ENCODE measurements at regions of chr10 and their contacts with region 1.

Region 1: GRCh38 chr10:113479346-113480080 is 73.3 kb upstream of the HABP2 start:
- DNase-seq: no peak
- ATAC-seq: no peak
- H3K4me3 Mint-ChIP-seq: no peak overlapping the region
- H3K27ac Mint-ChIP-seq: no peak overlapping the region
- H3K4me1 Mint-ChIP-seq: no peaks in the 10 kb centered on the region
- H3K27me3 Mint-ChIP-seq: peaks cover 5% of the 10 kb centered on the region

Region 2: GRCh38 chr10:112904000-112904399 is 575.5 kb before region 1 on chr10:
- CTCF ChIA-PET with region 1: no interaction called
- POLR2A ChIA-PET with region 1: no interaction called
- intact Hi-C with region 1: no loop called
- DNase-seq: no peak
- ATAC-seq: no peak
- H3K4me3 Mint-ChIP-seq: no peak overlapping the region
- H3K27ac Mint-ChIP-seq: no peak overlapping the region
- H3K4me1 Mint-ChIP-seq: no peaks in the 10 kb centered on the region
- H3K27me3 Mint-ChIP-seq: no peaks in the 10 kb centered on the region

Region 3: GRCh38 chr10:113491967-113492580 is 12.6 kb after region 1 on chr10:
- CTCF ChIA-PET with region 1: no interaction called
- POLR2A ChIA-PET with region 1: no interaction called
- intact Hi-C with region 1: loop called in 1 of 2 experiments (anchors 1 kb)
- DNase-seq: no peak
- ATAC-seq: no peak
- H3K4me3 Mint-ChIP-seq: no peak overlapping the region
- H3K27ac Mint-ChIP-seq: no peak overlapping the region
- H3K4me1 Mint-ChIP-seq: no peaks in the 10 kb centered on the region
- H3K27me3 Mint-ChIP-seq: peaks cover 11% of the 10 kb centered on the region

Region 4: GRCh38 chr10:113788604-113789083 is 309.1 kb after region 1 on chr10:
- CTCF ChIA-PET with region 1: no interaction called
- POLR2A ChIA-PET with region 1: no interaction called
- intact Hi-C with region 1: no loop called
- DNase-seq: no peak
- ATAC-seq: no peak
- H3K4me3 Mint-ChIP-seq: no peak overlapping the region
- H3K27ac Mint-ChIP-seq: no peak overlapping the region
- H3K4me1 Mint-ChIP-seq: no peaks in the 10 kb centered on the region
- H3K27me3 Mint-ChIP-seq: peaks cover 13% of the 10 kb centered on the region

Region 5: GRCh38 chr10:114603948-114604347 is 1124.4 kb after region 1 on chr10:
- CTCF ChIA-PET with region 1: no interaction called
- POLR2A ChIA-PET with region 1: no interaction called
- intact Hi-C with region 1: no loop called
- DNase-seq: no peak
- ATAC-seq: peak; percentile 61
- H3K4me3 Mint-ChIP-seq: no peak overlapping the region
- H3K27ac Mint-ChIP-seq: no peak overlapping the region
- H3K4me1 Mint-ChIP-seq: peaks cover 12% of the 10 kb centered on the region
- H3K27me3 Mint-ChIP-seq: no peaks in the 10 kb centered on the region